MCF 10A (cell line): ENCODE measurements at regions of chr6 and their contacts with region 1.

Region 1: DNA sequence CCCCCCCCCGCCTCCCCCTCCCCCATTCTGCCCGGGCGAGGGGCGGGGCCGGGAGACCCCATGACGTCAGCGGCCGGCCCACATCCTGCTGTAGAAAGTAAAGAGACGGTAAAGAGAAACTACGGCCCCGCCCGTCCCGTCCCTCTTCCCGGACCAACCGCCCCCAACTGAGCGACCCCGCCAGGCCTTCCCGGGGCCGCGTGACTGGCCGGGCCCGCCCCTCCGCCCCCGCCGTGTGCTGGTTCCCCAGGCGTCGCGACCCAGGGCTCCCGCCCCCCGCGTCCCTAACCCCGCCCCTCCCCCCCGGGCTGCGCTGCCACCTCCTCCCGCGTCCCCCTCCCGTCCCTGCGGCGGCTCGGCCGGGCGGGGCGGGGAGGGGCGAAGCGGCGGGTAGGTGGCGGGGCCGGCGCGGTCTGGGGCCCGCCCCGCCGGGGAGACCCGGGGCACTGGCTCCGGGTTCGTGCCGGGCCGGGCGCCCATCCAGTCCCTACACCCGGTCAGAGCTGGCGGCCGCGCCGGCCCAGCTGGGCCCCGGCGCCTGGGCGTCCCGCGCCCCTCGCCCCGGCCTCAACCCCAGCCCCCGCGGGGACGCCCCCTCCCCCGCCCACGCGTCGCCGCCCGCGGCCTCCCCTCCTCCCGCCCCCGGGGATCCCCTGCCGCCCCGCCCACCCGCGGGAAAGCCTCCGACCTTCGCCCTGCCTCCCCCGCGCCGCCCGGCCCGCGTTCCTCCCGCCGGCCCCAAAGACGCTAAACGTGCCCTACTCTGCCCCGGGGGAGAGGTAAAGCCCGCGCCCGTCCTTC is 636 bp upstream of the HIVEP1 start:
- DNase-seq: peak; percentile 97
- H3K4me3 Mint-ChIP-seq: peak overlapping the region; percentile 89
- H3K27ac Mint-ChIP-seq: peak overlapping the region; percentile 99
- H3K4me1 Mint-ChIP-seq: peaks cover 19% of the 10 kb centered on the region
- H3K27me3 Mint-ChIP-seq: no peaks in the 10 kb centered on the region
- CTCF ChIP-seq: no peak

Region 2: DNA sequence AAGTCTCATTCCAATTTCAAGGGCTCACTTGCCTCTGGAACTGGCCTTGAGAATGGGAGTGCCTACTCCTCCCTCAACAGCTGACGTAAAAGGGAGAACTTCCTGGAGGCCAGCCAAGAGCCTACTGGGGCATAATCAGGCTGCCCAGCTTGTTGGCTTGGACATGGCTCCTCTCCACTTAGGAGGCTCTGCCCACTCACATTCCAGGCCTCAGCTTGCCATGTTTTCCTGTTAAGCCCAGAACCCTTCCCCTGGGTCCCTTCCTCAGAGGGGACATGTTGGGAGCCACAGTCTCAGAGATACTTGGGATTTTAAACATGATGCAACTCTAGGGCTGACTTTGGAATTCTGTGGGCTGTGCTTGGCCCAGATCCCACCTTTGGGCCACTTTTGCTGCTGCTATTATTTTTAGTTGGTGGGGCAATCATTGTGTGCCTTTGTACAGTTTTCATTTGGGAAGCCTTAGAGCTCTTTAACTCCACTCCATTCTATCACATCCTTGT is 201.4 kb before region 1 on chr6:
- CTCF ChIA-PET with region 1: no interaction called
- POLR2A ChIA-PET with region 1: interaction called, 14 read pairs
- intact Hi-C with region 1: loop called (anchors 1 kb)
- DNase-seq: peak; percentile 98
- H3K4me3 Mint-ChIP-seq: peak overlapping the region; percentile 28
- H3K27ac Mint-ChIP-seq: peak overlapping the region; percentile 86
- H3K4me1 Mint-ChIP-seq: peaks cover 43% of the 10 kb centered on the region
- H3K27me3 Mint-ChIP-seq: no peaks in the 10 kb centered on the region
- CTCF ChIP-seq: no peak

Region 3: GRCh38 chr6:11975353-11975977 is 36.0 kb before region 1 on chr6:
- CTCF ChIA-PET with region 1: no interaction called
- POLR2A ChIA-PET with region 1: interaction called, 24 read pairs
- intact Hi-C with region 1: no loop called
- DNase-seq: no peak
- H3K4me3 Mint-ChIP-seq: no peak overlapping the region
- H3K27ac Mint-ChIP-seq: no peak overlapping the region
- H3K4me1 Mint-ChIP-seq: peaks cover 9% of the 10 kb centered on the region
- H3K27me3 Mint-ChIP-seq: no peaks in the 10 kb centered on the region
- CTCF ChIP-seq: no peak

Region 4: GRCh38 chr6:12033770-12034169 is 22.3 kb after region 1 on chr6:
- CTCF ChIA-PET with region 1: interaction called, 5 read pairs
- POLR2A ChIA-PET with region 1: interaction called, 30 read pairs
- intact Hi-C with region 1: no loop called
- DNase-seq: peak; percentile 72
- H3K4me3 Mint-ChIP-seq: no peak overlapping the region
- H3K27ac Mint-ChIP-seq: peak overlapping the region; percentile 25
- H3K4me1 Mint-ChIP-seq: peaks cover 47% of the 10 kb centered on the region
- H3K27me3 Mint-ChIP-seq: no peaks in the 10 kb centered on the region
- CTCF ChIP-seq: no peak

Region 5: GRCh38 chr6:12516070-12516469 is 504.6 kb after region 1 on chr6:
- CTCF ChIA-PET with region 1: no interaction called
- POLR2A ChIA-PET with region 1: no interaction called
- intact Hi-C with region 1: no loop called
- DNase-seq: no peak
- H3K4me3 Mint-ChIP-seq: no peak overlapping the region
- H3K27ac Mint-ChIP-seq: no peak overlapping the region
- H3K4me1 Mint-ChIP-seq: peaks cover 6% of the 10 kb centered on the region
- H3K27me3 Mint-ChIP-seq: no peaks in the 10 kb centered on the region
- CTCF ChIP-seq: no peak